ENCODE measurements at regions of chr10 and their contacts with region 1.

Region 1: DNA sequence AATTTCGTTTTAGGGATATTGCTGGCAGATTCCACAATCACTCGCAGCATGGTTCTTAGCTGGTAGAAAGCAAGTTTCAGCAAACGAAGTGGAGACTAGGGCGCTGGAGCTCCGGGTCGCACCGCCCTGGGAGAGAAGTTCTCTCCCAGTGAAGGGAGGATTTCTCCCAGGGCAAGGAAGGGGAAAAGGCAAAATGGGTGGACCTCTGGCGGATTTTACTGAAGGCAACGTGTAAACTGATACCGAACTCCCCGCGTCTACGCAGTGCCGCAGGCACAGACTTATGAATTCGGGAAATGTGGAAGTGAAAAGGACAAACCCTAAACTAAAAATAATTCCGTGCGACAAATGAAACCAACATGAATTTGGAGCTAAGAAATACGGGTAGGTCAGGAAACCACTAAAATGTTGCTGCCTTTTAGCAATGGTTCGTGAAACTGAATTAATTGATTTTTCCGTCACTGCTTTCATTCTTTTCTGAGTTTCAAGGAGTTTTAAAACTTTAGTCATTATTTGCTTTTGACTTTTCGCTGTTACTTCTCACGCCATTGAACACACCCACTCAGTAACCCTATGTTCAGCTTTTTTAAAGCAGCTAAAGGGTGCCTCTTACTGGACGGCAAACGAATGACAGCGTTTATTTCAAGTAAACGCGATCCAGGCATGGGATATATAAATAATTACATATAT is at the start of gene MYOF:
- DNase-seq: peak; percentile 65
- H3K4me3 ChIP-seq: peak within 1 kb of the TSS; percentile 59 to 62
- H3K27ac ChIP-seq: peak within 1 kb of the TSS; percentile 78 to 98
- H3K4me1 ChIP-seq: no peaks in the 10 kb centered on the region; a peak in 1 of 4 replicates
- H3K27me3 ChIP-seq: no peaks in the 10 kb centered on the region
- CTCF ChIP-seq: peak; percentile 65
- EP300 ChIP-seq: no peak
- RAD21 ChIP-seq: peak; percentile 91
- polyA plus RNA-seq, gene MYOF: 103 and 134 TPM in 2 replicates

Region 2: DNA sequence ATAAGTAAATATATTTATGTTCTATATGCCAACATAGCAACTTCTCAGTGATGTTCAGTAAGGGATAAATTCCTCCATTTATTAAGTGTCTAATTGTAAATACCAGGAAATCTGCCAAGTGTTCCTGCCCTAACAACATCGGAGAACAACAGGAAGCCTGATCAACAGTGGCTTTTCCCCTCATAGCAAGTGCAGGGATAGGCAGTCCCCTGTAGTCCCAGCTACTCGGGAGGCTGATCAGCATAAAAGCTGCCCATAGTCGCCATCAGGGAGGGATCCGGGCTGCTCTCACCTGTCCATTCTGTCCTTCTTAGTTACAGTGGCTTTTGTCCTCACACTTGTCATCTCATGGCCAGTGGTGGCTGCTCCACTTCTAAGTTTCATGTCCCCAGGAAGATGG is 1049.7 kb before region 1 on chr10:
- CTCF ChIA-PET with region 1: no interaction called
- POLR2A ChIA-PET with region 1: no interaction called
- DNase-seq: no peak
- H3K4me3 ChIP-seq: no peak overlapping the region
- H3K27ac ChIP-seq: no peak overlapping the region
- H3K4me1 ChIP-seq: no peaks in the 10 kb centered on the region
- H3K27me3 ChIP-seq: no peaks in the 10 kb centered on the region
- CTCF ChIP-seq: no peak
- EP300 ChIP-seq: no peak
- RAD21 ChIP-seq: no peak

Region 3: DNA sequence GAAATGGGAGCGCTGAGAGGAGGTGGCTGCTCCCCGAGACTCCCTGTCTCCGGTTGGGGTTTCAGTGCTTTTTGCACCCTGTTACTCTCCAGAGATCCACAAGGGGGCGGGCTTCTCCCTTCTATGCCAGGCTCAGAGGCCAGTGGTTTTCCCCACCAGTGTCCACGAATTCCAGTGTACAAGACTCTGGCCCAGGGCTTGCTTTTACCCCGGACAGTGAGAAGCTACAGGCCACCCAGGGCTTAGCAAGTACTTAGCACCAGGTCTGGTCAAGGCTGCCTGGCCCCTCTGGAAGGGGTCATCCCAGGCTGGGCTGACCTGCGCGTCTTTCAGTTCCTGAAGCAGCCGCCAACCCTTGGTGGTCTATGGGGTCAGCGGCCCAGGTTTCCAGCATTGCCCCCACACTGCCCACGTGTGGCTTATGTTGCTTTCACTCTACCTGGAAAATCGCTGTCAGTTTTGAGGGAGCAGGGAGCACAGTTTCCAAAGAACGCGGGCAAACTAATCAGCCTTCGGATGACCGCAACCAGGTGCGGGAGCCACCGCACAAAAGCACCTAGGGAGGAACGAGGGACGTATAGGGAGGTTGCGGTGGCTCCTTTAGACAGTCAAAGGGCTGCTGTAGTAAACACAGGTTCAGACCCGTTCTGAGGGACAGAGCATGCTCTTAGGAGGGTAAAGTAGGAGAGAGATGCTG is 401.8 kb before region 1 on chr10:
- CTCF ChIA-PET with region 1: interaction called, 10 read pairs
- POLR2A ChIA-PET with region 1: no interaction called
- DNase-seq: peak; percentile 84
- H3K4me3 ChIP-seq: peak overlapping the region; percentile 15 to 42; a peak in 2 of 4 replicates
- H3K27ac ChIP-seq: no peak overlapping the region
- H3K4me1 ChIP-seq: peaks cover 0 to 10% of the 10 kb centered on the region in 2 experiments; a peak in 1 of 4 replicates
- H3K27me3 ChIP-seq: peaks cover 9% of the 10 kb centered on the region; the same call in 1 of the 2 replicates
- CTCF ChIP-seq: peak; percentile 88
- EP300 ChIP-seq: no peak
- RAD21 ChIP-seq: peak; percentile 78

Region 4: DNA sequence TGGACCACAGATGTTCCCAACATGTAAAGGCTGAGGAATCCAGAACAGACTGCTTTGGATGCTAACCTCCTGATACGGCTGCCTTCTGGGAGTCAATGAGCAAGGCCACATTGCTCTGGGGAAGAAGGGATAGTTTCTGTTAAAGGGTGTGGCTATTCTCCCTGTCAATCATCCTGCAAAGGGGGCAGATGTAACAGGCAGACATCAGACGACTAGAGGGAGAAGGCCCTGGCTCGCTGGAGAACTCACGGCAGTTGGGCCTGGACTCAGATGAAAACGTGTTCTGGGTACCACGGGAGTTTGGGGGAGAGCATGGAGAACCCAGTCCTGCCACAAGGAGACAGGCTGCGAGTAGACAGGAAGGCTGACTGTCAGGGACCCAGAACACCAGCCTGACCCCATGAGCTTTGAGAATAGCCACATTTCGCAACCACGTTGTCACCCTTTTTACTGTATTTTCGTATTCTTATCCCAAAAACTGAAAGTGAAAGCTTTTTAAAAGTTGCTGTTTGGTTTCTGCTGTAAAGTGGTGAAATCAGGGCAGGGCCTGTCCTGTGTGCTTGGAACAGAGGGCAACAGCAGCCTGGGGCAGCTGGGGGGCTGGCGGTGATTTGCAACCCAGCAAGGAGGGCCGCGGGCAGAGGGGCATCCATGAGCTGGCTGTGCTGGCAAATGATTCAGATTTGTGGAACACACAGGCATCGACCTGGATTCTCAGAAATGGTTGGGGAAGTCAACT is 95.5 kb before region 1 on chr10:
- CTCF ChIA-PET with region 1: interaction called, 515 read pairs
- POLR2A ChIA-PET with region 1: no interaction called
- DNase-seq: no peak
- H3K4me3 ChIP-seq: no peak overlapping the region
- H3K27ac ChIP-seq: peak overlapping the region in 1 of 2 experiments; percentile 96; a peak in 1 of 4 replicates
- H3K4me1 ChIP-seq: peaks cover 0 to 20% of the 10 kb centered on the region in 2 experiments; a peak in 3 of 4 replicates
- H3K27me3 ChIP-seq: no peaks in the 10 kb centered on the region
- CTCF ChIP-seq: no peak
- EP300 ChIP-seq: no peak
- RAD21 ChIP-seq: no peak

Region 5: DNA sequence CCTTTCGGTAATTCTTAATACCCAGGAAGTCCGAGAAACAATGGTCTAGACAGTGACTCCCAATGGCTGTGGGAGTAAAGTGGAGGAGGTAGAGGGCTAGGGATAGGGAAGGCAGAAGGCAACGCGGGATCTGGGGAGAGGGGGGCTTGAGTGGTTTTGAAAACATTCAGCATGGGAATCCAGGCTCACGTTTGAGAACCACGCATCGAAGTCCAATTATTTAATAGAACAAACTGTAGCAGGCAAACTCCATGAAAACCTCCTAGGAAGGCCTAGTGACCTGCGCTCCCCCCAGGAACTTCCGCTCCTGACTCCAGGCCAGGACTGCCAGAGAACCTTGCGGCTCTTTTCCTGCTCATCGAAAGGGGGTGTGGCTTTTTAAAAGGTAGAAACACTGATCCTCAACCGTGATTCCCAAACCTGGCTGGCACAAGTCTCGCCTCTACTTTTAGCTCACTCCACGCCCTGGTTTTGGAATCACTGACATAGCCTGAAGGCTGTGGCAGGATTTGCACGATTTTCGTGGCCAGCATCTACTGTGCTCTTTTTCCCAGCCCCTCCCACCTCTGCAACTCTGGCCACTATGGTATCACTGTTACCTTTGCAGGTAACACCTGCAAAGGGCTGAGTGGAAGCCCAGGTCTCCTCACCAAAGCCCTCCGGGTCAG is 43.6 kb before region 1 on chr10:
- CTCF ChIA-PET with region 1: interaction called, 36 read pairs
- POLR2A ChIA-PET with region 1: no interaction called
- DNase-seq: no peak
- H3K4me3 ChIP-seq: no peak overlapping the region
- H3K27ac ChIP-seq: peak overlapping the region in 1 of 2 experiments; percentile 100; a peak in 3 of 4 replicates
- H3K4me1 ChIP-seq: peaks cover 14 to 62% of the 10 kb centered on the region in 2 experiments
- H3K27me3 ChIP-seq: no peaks in the 10 kb centered on the region
- CTCF ChIP-seq: no peak
- EP300 ChIP-seq: no peak
- RAD21 ChIP-seq: no peak

Region 6: GRCh38 chr10:93463678-93464476 is 18.4 kb before region 1 on chr10:
- CTCF ChIA-PET with region 1: interaction called, 11 read pairs
- POLR2A ChIA-PET with region 1: no interaction called
- DNase-seq: no peak
- H3K4me3 ChIP-seq: no peak overlapping the region
- H3K27ac ChIP-seq: peak overlapping the region; percentile 2 to 99; a peak in 3 of 4 replicates
- H3K4me1 ChIP-seq: peaks cover 14 to 59% of the 10 kb centered on the region in 2 experiments; a peak in 3 of 4 replicates
- H3K27me3 ChIP-seq: no peaks in the 10 kb centered on the region
- CTCF ChIP-seq: no peak
- EP300 ChIP-seq: no peak
- RAD21 ChIP-seq: no peak

Region 7: GRCh38 chr10:93496322-93497041 is 14.2 kb after region 1 on chr10 and contains the start of gene CEP55:
- CTCF ChIA-PET with region 1: interaction called, 24 read pairs
- POLR2A ChIA-PET with region 1: no interaction called
- DNase-seq: peak; percentile 97
- H3K4me3 ChIP-seq: peak within 1 kb of the TSS; percentile 81 to 82
- H3K27ac ChIP-seq: peak within 1 kb of the TSS; percentile 44 to 54
- H3K4me1 ChIP-seq: peaks cover 0 to 4% of the 10 kb centered on the region in 2 experiments; a peak in 3 of 4 replicates
- H3K27me3 ChIP-seq: no peaks in the 10 kb centered on the region
- CTCF ChIP-seq: no peak
- EP300 ChIP-seq: no peak
- RAD21 ChIP-seq: no peak
- polyA plus RNA-seq, gene CEP55: 9.8 and 11.3 TPM in 2 replicates

Region 8: GRCh38 chr10:93591065-93591808 is 108.9 kb after region 1 on chr10:
- CTCF ChIA-PET with region 1: no interaction called
- POLR2A ChIA-PET with region 1: no interaction called
- DNase-seq: no peak
- H3K4me3 ChIP-seq: no peak overlapping the region
- H3K27ac ChIP-seq: no peak overlapping the region
- H3K4me1 ChIP-seq: no peaks in the 10 kb centered on the region
- H3K27me3 ChIP-seq: peaks cover 5% of the 10 kb centered on the region; the same call in 1 of the 2 replicates
- CTCF ChIP-seq: no peak
- EP300 ChIP-seq: no peak
- RAD21 ChIP-seq: no peak

Region 9: DNA sequence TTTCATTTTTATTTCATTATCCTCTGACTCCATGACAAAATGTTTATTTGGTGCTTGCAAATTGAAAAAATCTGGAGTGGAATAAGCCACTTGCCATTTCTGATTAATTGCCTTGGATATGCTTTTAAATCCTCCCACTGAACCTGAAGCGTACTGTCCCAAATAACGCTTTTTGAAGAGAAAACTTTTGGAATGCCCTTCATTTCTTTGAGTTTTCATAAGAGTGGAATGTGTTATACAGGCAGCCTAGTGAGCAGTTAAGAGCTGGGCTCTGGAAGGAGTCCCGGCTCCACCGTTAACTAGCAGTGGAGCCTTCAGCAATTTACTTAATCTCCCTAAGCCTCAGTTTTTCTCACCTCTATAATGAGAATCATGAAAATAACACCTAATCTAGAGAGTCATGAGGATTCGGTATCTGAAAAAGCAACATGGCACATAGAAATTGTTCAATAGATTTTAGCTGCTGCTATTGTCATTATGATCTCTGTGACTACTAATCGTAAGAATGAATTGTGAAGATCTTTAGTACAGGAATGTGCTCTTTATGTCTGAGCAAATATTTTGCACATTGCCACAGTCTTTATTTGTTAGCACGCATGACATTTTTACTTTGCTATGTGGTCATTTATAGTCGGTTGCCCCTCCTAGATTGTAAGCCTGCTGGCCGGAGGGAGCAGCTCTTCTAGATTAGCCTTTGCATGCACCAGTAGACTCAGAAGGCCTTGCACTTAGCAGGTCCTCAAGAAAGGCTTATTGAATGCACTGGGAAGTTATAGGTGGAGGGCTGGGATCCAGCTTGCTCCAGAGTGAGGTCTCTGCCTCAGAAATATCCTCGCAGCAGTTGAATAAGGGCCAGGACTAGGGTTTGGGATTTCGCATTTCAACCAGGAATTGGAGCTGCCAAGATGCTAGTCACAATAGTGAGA is 570.8 kb after region 1 on chr10:
- CTCF ChIA-PET with region 1: no interaction called
- POLR2A ChIA-PET with region 1: no interaction called
- DNase-seq: no peak
- H3K4me3 ChIP-seq: no peak overlapping the region
- H3K27ac ChIP-seq: no peak overlapping the region
- H3K4me1 ChIP-seq: no peaks in the 10 kb centered on the region
- H3K27me3 ChIP-seq: no peaks in the 10 kb centered on the region
- CTCF ChIP-seq: no peak
- EP300 ChIP-seq: no peak
- RAD21 ChIP-seq: no peak

Measured in SK-N-SH (cell line).